Endothelial cell of umbilical vein (primary cell): ENCODE measurements at regions of chr4 and their contacts with region 1.

Region 1: DNA sequence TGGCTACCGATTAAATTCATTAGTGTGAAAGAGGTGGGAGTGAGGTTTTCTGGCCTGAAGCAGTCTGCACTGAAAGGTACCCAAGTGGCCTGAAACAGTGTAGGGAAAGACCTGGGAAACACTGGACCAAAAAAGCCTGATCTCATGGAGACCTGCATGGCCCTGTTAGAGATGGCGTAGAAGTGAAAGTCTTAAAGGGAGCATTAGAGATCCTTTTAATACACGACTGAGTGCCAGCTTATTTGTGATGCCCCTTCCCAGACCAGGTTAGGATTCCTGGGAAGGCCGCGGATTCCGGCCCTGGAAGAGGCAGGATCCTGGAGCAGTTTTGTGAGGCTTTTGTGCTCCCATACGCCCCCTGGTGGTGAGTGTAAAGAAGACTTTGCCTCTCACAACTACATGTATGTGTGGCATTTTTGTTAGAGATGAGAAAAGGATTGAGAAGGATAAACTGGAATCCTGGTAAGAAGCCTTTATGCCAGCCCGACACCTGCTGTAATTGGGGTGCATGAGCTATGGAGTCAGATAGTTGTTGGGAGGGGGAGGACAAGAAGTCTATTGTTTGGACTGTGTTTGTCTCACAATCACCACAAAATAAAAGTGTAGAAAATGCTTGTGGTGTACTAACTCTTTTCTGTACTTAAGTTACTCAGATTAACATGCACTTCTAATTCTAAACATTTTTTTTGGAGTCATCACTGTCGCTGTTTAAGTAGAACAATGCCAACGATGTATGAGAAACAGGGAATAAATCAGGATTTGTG is 54.0 kb downstream of the JADE1 start:
- DNase-seq: peak; percentile 81
- H3K4me3 ChIP-seq: no peak overlapping the region
- H3K27ac ChIP-seq: no peak overlapping the region
- H3K4me1 ChIP-seq: peaks cover 11% of the 10 kb centered on the region
- H3K27me3 ChIP-seq: no peaks in the 10 kb centered on the region
- CTCF ChIP-seq: peak; percentile 78 to 83
- POLR2A ChIP-seq: no peak

Region 2: GRCh38 chr4:128279624-128280225 is 583.8 kb before region 1 on chr4:
- CTCF ChIA-PET with region 1: no interaction called
- POLR2A ChIA-PET with region 1: no interaction called
- dilution Hi-C with region 1: no loop called
- intact Hi-C with region 1: no loop called
- DNase-seq: no peak
- H3K4me3 ChIP-seq: no peak overlapping the region
- H3K27ac ChIP-seq: no peak overlapping the region
- H3K4me1 ChIP-seq: peaks cover 3% of the 10 kb centered on the region
- H3K27me3 ChIP-seq: no peaks in the 10 kb centered on the region
- CTCF ChIP-seq: no peak
- POLR2A ChIP-seq: no peak

Region 3: GRCh38 chr4:128379860-128380259 is 483.6 kb before region 1 on chr4:
- CTCF ChIA-PET with region 1: interaction called, 3 read pairs
- POLR2A ChIA-PET with region 1: no interaction called
- dilution Hi-C with region 1: no loop called
- intact Hi-C with region 1: loop called (anchors 1 kb)
- DNase-seq: peak; percentile 32
- H3K4me3 ChIP-seq: no peak overlapping the region
- H3K27ac ChIP-seq: no peak overlapping the region
- H3K4me1 ChIP-seq: no peaks in the 10 kb centered on the region
- H3K27me3 ChIP-seq: no peaks in the 10 kb centered on the region
- CTCF ChIP-seq: peak; percentile 55 to 71
- POLR2A ChIP-seq: no peak

Region 4: DNA sequence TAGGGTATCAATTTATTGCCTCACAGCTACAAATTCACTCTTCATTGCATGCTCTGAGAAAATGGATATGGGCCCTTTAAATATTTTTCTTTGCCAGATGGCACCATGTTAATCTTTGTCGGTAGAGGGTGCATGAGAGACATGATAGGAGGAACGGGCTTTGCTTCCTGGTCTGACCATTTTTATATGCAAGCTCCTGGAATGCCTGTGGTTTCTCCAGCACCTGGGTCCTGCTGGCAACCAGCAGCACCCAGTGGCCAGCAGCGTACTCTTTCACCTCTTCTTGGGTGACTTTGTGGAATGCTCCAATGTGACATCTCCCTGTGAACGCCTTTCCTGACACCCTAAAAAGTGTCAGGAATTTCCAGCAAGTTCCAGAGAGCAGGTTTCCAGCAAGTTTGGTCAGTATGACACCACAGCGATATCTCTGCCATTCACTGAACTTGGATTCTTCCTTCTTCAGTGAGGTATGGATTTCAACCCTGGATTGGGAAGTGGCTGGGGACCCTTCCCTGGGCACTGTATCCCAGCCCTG is 435.6 kb before region 1 on chr4:
- CTCF ChIA-PET with region 1: interaction called, 9 read pairs
- POLR2A ChIA-PET with region 1: no interaction called
- dilution Hi-C with region 1: no loop called
- intact Hi-C with region 1: loop called (anchors 1 kb)
- DNase-seq: peak; percentile 48
- H3K4me3 ChIP-seq: no peak overlapping the region
- H3K27ac ChIP-seq: no peak overlapping the region
- H3K4me1 ChIP-seq: no peaks in the 10 kb centered on the region
- H3K27me3 ChIP-seq: no peaks in the 10 kb centered on the region
- CTCF ChIP-seq: peak; percentile 12 to 30
- POLR2A ChIP-seq: no peak

Region 5: GRCh38 chr4:128565565-128566186 is 297.8 kb before region 1 on chr4:
- CTCF ChIA-PET with region 1: no interaction called
- POLR2A ChIA-PET with region 1: no interaction called
- dilution Hi-C with region 1: no loop called
- intact Hi-C with region 1: loop called (anchors 1 kb)
- DNase-seq: peak; percentile 51
- H3K4me3 ChIP-seq: no peak overlapping the region
- H3K27ac ChIP-seq: no peak overlapping the region
- H3K4me1 ChIP-seq: peaks cover 17% of the 10 kb centered on the region
- H3K27me3 ChIP-seq: no peaks in the 10 kb centered on the region
- CTCF ChIP-seq: peak; percentile 56 to 68
- POLR2A ChIP-seq: no peak